HCT116 (cell line): ENCODE measurements at regions of chr5 and their contacts with region 1.

Region 1: GRCh38 chr5:148912714-148913398 is 86.4 kb downstream of the ADRB2 start:
- DNase-seq: peak; percentile 54
- ATAC-seq: peak; percentile 75
- H3K4me3 ChIP-seq: peak overlapping the region in 1 of 2 experiments; percentile 36; a peak in 1 of 4 replicates
- H3K27ac ChIP-seq: peak overlapping the region; percentile 19; the same call in 1 of the 2 replicates
- H3K4me1 ChIP-seq: peaks cover 21 to 65% of the 10 kb centered on the region in 2 experiments
- H3K27me3 ChIP-seq: no peaks in the 10 kb centered on the region
- CTCF ChIP-seq: peak; percentile 52 to 67 (median 58); a peak in 5 of 6 replicates
- POLR2A ChIP-seq: no peak
- RAD21 ChIP-seq: peak; percentile 82

Region 2: GRCh38 chr5:148214665-148215185 is 698.1 kb before region 1 on chr5:
- CTCF ChIA-PET with region 1: no interaction called
- POLR2A ChIA-PET with region 1: no interaction called
- RAD21 ChIA-PET with region 1: no interaction called
- intact Hi-C with region 1: no loop called
- DNase-seq: no peak
- ATAC-seq: no peak
- H3K4me3 ChIP-seq: no peak overlapping the region
- H3K27ac ChIP-seq: no peak overlapping the region
- H3K4me1 ChIP-seq: no peaks in the 10 kb centered on the region
- H3K27me3 ChIP-seq: no peaks in the 10 kb centered on the region
- CTCF ChIP-seq: no peak
- POLR2A ChIP-seq: no peak
- RAD21 ChIP-seq: no peak

Region 3: GRCh38 chr5:148957591-148958202 is 44.8 kb after region 1 on chr5:
- CTCF ChIA-PET with region 1: interaction called, 36 read pairs
- POLR2A ChIA-PET with region 1: no interaction called
- RAD21 ChIA-PET with region 1: no interaction called
- intact Hi-C with region 1: loop called (anchors 1 kb)
- DNase-seq: no peak
- ATAC-seq: peak; percentile 76
- H3K4me3 ChIP-seq: no peak overlapping the region
- H3K27ac ChIP-seq: no peak overlapping the region
- H3K4me1 ChIP-seq: peaks cover 0 to 7% of the 10 kb centered on the region in 2 experiments; a peak in 1 of 4 replicates
- H3K27me3 ChIP-seq: no peaks in the 10 kb centered on the region
- CTCF ChIP-seq: peak; percentile 84 to 97 (median 90)
- POLR2A ChIP-seq: no peak
- RAD21 ChIP-seq: peak; percentile 83

Region 4: GRCh38 chr5:148998174-148998797 is 85.4 kb after region 1 on chr5:
- CTCF ChIA-PET with region 1: interaction called, 3 read pairs
- POLR2A ChIA-PET with region 1: no interaction called
- RAD21 ChIA-PET with region 1: no interaction called
- intact Hi-C with region 1: loop called (anchors 1 kb)
- DNase-seq: peak; percentile 63
- ATAC-seq: peak; percentile 82
- H3K4me3 ChIP-seq: no peak overlapping the region
- H3K27ac ChIP-seq: no peak overlapping the region
- H3K4me1 ChIP-seq: peaks cover 8 to 20% of the 10 kb centered on the region in 2 experiments
- H3K27me3 ChIP-seq: no peaks in the 10 kb centered on the region
- CTCF ChIP-seq: peak; percentile 63 to 81 (median 80)
- POLR2A ChIP-seq: no peak
- RAD21 ChIP-seq: peak; percentile 91